B cell (primary cell): ENCODE measurements at regions of chr1 and their contacts with region 1.

Region 1: DNA sequence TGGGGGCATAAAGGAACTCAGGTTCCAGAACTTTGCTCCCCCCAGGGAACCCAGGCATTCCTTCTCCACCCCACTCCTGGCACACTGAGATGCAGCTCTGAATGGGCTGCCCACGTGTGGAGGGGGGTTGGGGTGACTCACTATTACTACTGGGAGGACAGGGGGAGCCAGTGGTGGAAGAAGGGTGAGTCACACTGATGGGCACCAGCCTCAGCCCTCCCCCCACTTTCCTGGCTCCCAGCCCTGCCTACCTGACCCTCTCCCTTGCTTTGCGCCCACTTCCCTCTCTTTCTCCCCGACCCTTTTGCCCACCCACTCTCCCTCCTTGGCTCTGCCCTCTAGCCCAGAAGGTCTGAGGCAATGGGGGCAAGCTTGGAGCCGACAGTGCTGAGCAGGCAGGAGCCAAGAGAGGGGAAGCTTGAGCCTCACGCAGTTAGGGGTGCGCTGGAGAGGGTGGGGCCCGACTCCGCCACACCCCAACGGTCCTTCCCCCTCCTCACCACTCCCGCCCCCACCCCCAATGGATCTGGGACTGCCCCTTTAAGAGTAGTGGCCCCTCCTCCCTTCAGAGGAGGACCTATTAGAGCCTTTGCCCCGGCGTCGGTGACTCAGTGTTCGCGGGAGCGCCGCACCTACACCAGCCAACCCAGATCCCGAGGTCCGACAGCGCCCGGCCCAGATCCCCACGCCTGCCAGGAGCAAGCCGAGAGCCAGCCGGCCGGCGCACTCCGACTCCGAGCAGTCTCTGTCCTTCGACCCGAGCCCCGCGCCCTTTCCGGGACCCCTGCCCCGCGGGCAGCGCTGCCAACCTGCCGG is at the start of gene LMNA:
- DNase-seq: peak; percentile 80
- ATAC-seq: peak; percentile 79
- H3K4me3 ChIP-seq: peak within 1 kb of the TSS in 4 of 5 experiments; percentile 45 to 76 (median 64)
- H3K4me3 Mint-ChIP-seq: peak within 1 kb of the TSS; percentile 90
- H3K27ac ChIP-seq: peak within 1 kb of the TSS in 1 of 2 donors; percentile 64
- H3K27ac Mint-ChIP-seq: peak within 1 kb of the TSS; percentile 77
- H3K4me1 ChIP-seq: peaks cover 22 to 24% of the 10 kb centered on the region in 2 donors
- H3K4me1 Mint-ChIP-seq: peaks cover 30% of the 10 kb centered on the region
- H3K27me3 ChIP-seq: peaks cover 0 to 54% (median 12%) of the 10 kb centered on the region in 4 experiments
- H3K27me3 Mint-ChIP-seq: peaks cover 34% of the 10 kb centered on the region
- CTCF ChIP-seq: no peak
- total RNA-seq, gene LMNA: 28.7 and 32.3 TPM in 2 replicates

Region 2: GRCh38 chr1:156012051-156012817 is 102.1 kb before region 1 on chr1:
- CTCF ChIA-PET with region 1: no interaction called
- POLR2A ChIA-PET with region 1: no interaction called
- intact Hi-C with region 1: no loop called
- DNase-seq: peak; percentile 55
- ATAC-seq: peak; percentile 75
- H3K4me3 ChIP-seq: no peak overlapping the region
- H3K4me3 Mint-ChIP-seq: no peak overlapping the region
- H3K27ac ChIP-seq: peak overlapping the region in 1 of 2 donors; percentile 19
- H3K27ac Mint-ChIP-seq: peak overlapping the region; percentile 59
- H3K4me1 ChIP-seq: peaks cover 6 to 20% of the 10 kb centered on the region in 2 donors
- H3K4me1 Mint-ChIP-seq: peaks cover 19% of the 10 kb centered on the region
- H3K27me3 ChIP-seq: no peaks in the 10 kb centered on the region
- H3K27me3 Mint-ChIP-seq: no peaks in the 10 kb centered on the region
- CTCF ChIP-seq: no peak

Region 3: GRCh38 chr1:156104065-156104810 is 10.1 kb before region 1 on chr1:
- CTCF ChIA-PET with region 1: interaction called, 970 read pairs
- POLR2A ChIA-PET with region 1: interaction called, 29 read pairs
- intact Hi-C with region 1: loop called (anchors 1 kb)
- DNase-seq: peak; percentile 73
- ATAC-seq: no peak
- H3K4me3 ChIP-seq: no peak overlapping the region
- H3K4me3 Mint-ChIP-seq: peak overlapping the region; percentile 86
- H3K27ac ChIP-seq: peak overlapping the region in 1 of 2 donors; percentile 99
- H3K27ac Mint-ChIP-seq: peak overlapping the region; percentile 92
- H3K4me1 ChIP-seq: peaks cover 35 to 43% of the 10 kb centered on the region in 2 donors
- H3K4me1 Mint-ChIP-seq: peaks cover 55% of the 10 kb centered on the region
- H3K27me3 ChIP-seq: peaks cover 0 to 5% (median 2%) of the 10 kb centered on the region in 4 experiments
- H3K27me3 Mint-ChIP-seq: no peaks in the 10 kb centered on the region
- CTCF ChIP-seq: no peak